IMR-90 (cell line): ENCODE measurements at regions of chr20 and their contacts with region 1.

Region 1: GRCh38 chr20:55116598-55116997 is 641.2 kb downstream of the DOK5 start:
- DNase-seq: no peak
- ATAC-seq: no peak
- H3K4me3 ChIP-seq: no peak overlapping the region
- H3K27ac ChIP-seq: no peak overlapping the region
- H3K4me1 ChIP-seq: no peaks in the 10 kb centered on the region
- H3K27me3 ChIP-seq: no peaks in the 10 kb centered on the region
- CTCF ChIP-seq: no peak
- POLR2A ChIP-seq: no peak
- RAD21 ChIP-seq: no peak

Region 2: DNA sequence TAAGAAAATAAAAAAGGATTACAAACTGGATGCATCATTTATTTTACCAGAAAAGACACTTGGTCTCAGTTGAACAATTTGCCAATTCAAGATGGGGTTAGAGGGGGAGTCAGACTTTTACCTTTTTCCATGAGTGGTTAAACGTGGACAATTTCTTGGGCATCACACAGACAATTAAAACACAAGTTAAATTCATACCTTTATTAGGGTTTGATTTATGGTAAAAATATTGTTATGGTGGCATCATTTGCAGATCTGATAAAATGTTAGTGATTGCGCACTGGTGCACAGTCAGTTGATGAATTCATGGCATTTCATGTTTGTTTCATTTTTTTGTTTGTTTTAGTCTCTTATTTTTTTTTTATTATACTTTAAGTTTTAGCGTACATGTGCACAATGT is 241.3 kb before region 1 on chr20:
- CTCF ChIA-PET with region 1: no interaction called
- POLR2A ChIA-PET with region 1: no interaction called
- dilution Hi-C with region 1: no loop called
- in situ Hi-C with region 1: no loop called
- intact Hi-C with region 1: no loop called
- DNase-seq: no peak
- ATAC-seq: no peak
- H3K4me3 ChIP-seq: no peak overlapping the region
- H3K27ac ChIP-seq: no peak overlapping the region
- H3K4me1 ChIP-seq: no peaks in the 10 kb centered on the region
- H3K27me3 ChIP-seq: no peaks in the 10 kb centered on the region
- CTCF ChIP-seq: no peak
- POLR2A ChIP-seq: no peak
- RAD21 ChIP-seq: no peak

Region 3: DNA sequence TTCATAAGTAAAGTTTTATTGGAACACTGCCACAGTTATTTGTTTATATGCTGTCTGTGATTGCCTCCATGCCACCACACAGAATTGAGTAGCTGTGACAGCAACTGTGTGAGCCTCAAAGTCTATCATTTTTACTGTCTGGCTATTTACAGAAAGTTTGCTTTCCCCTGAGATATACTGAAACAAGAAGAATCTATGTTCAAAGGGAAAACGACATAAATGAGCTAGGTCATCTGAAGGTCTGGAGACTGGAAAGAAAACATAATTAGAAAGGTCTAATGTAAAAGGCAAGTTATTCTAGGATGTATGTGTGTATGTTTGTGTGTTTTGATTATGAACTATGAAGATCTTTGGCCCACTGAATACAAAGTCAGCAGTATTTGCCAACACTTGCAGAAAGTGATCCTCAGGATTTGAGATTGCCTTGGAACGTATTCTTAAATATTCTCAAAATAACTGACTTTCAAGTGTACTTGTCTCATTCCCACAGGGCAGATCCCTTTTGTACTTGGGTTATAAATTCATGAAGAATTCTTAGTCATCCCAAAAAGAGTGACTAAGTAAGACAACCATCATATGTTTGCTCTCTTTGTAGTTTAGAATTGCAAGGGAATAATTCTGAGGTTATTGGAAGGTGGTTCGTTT is 36.5 kb after region 1 on chr20:
- CTCF ChIA-PET with region 1: no interaction called
- POLR2A ChIA-PET with region 1: no interaction called
- dilution Hi-C with region 1: no loop called
- in situ Hi-C with region 1: no loop called
- intact Hi-C with region 1: loop called (anchors 1 kb)
- DNase-seq: no peak
- ATAC-seq: no peak
- H3K4me3 ChIP-seq: no peak overlapping the region
- H3K27ac ChIP-seq: no peak overlapping the region
- H3K4me1 ChIP-seq: no peaks in the 10 kb centered on the region
- H3K27me3 ChIP-seq: no peaks in the 10 kb centered on the region
- CTCF ChIP-seq: no peak
- POLR2A ChIP-seq: no peak
- RAD21 ChIP-seq: no peak